ENCODE measurements at regions of chr10 and their contacts with region 1.

Region 1: DNA sequence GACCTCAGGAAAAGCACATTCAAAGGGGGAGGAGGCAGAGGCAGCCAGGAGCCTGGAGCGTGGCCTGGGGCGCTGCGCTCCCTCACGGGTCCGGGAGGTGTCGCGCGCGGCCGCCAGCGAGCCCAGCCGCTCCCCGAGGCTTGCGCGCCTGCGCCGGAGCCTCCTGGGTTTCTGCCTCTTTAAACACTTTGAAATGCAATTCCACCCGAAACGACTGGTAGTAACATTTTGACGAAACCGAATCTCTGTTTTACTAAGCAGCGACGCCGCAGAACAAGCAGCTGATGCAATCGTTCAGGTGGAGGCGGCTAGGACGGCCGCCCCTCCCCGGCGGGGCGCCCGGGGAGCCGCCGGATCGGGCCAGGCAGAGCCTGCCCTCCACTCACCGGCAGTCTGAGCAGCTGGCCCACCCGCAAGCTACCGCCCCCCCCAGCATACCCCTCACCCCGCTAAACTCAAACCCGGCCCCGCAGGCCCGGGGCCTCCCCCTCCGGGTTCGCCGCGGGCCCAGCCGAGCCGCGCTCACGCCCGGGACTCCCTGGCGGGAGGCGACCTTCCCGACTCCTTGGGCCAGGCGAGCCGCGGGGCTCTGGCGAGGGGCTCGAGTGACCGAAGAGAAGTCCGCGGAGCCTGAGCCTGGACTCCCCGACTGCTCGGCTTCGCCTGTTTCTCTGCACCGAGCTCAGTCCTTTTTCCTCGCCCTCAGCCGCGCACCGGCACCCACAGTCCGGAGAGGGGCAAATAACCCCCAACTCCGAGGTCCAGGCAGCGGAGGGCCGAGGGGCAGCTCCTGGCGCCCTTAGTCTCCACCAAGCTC is 3.2 kb downstream of the MKX start:
- DNase-seq: peak; percentile 58 to 82 (median 77)
- ATAC-seq: peak; percentile 87
- H3K4me3 ChIP-seq: peak overlapping the region; percentile 73
- H3K4me3 Mint-ChIP-seq: peak overlapping the region; percentile 70 to 96 (median 86)
- H3K27ac ChIP-seq: no peak overlapping the region
- H3K27ac Mint-ChIP-seq: peak overlapping the region in 1 of 9 donors; percentile 20
- H3K4me1 ChIP-seq: peaks cover 27 to 42% of the 10 kb centered on the region in 2 donors
- H3K4me1 Mint-ChIP-seq: peaks cover 23 to 44% (median 29%) of the 10 kb centered on the region in 7 donors
- H3K27me3 ChIP-seq: peaks cover 16 to 55% of the 10 kb centered on the region in 2 donors
- H3K27me3 Mint-ChIP-seq: peaks cover 51 to 82% (median 65%) of the 10 kb centered on the region in 5 donors

Region 2: GRCh38 chr10:27433976-27434375 is 308.4 kb before region 1 on chr10:
- CTCF ChIA-PET with region 1: no interaction called
- POLR2A ChIA-PET with region 1: no interaction called
- intact Hi-C with region 1: no loop called
- DNase-seq: no peak
- ATAC-seq: no peak
- H3K4me3 ChIP-seq: no peak overlapping the region
- H3K4me3 Mint-ChIP-seq: no peak overlapping the region
- H3K27ac ChIP-seq: no peak overlapping the region
- H3K27ac Mint-ChIP-seq: no peak overlapping the region
- H3K4me1 ChIP-seq: no peaks in the 10 kb centered on the region
- H3K4me1 Mint-ChIP-seq: no peaks in the 10 kb centered on the region
- H3K27me3 ChIP-seq: no peaks in the 10 kb centered on the region
- H3K27me3 Mint-ChIP-seq: peaks cover 0 to 26% (median 8%) of the 10 kb centered on the region in 5 donors

Region 3: GRCh38 chr10:27446091-27446918 is 296.1 kb before region 1 on chr10:
- CTCF ChIA-PET with region 1: no interaction called
- POLR2A ChIA-PET with region 1: no interaction called
- intact Hi-C with region 1: loop called in 1 of 2 experiments (anchors 10 kb)
- DNase-seq: peak in 6 of 9 donors; percentile 23 to 58 (median 46)
- ATAC-seq: peak; percentile 65
- H3K4me3 ChIP-seq: no peak overlapping the region
- H3K4me3 Mint-ChIP-seq: peak overlapping the region in 3 of 10 donors; percentile 20 to 53 (median 23)
- H3K27ac ChIP-seq: no peak overlapping the region
- H3K27ac Mint-ChIP-seq: peak overlapping the region in 1 of 9 donors; percentile 32
- H3K4me1 ChIP-seq: no peaks in the 10 kb centered on the region
- H3K4me1 Mint-ChIP-seq: peaks cover 6 to 19% (median 17%) of the 10 kb centered on the region in 7 donors
- H3K27me3 ChIP-seq: no peaks in the 10 kb centered on the region
- H3K27me3 Mint-ChIP-seq: peaks cover 0 to 16% (median 0%) of the 10 kb centered on the region in 5 donors

Region 4: DNA sequence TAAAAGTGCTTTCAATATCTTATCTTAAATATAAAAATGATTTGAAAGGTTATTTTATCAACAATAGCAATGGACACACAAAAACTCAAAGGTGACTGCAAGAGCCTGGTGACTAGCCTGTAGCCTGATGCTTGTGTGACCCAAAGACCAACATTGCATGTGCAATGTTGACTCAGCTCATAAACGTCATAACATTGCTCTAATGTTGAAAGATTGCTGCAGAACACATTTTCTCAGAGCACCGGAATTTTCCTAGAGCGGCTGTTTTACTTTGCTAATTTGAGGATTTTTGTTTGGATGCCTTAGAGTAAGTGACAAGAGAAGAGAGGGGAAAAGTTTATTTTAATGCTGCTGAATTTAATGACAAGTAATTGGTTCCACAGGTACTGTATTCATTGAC is 131.2 kb before region 1 on chr10:
- CTCF ChIA-PET with region 1: no interaction called
- POLR2A ChIA-PET with region 1: no interaction called
- intact Hi-C with region 1: no loop called
- DNase-seq: no peak
- ATAC-seq: no peak
- H3K4me3 ChIP-seq: no peak overlapping the region
- H3K4me3 Mint-ChIP-seq: no peak overlapping the region
- H3K27ac ChIP-seq: no peak overlapping the region
- H3K27ac Mint-ChIP-seq: no peak overlapping the region
- H3K4me1 ChIP-seq: no peaks in the 10 kb centered on the region
- H3K4me1 Mint-ChIP-seq: peaks cover 0 to 12% (median 4%) of the 10 kb centered on the region in 7 donors
- H3K27me3 ChIP-seq: no peaks in the 10 kb centered on the region
- H3K27me3 Mint-ChIP-seq: peaks cover 3 to 10% (median 5%) of the 10 kb centered on the region in 5 donors

Region 5: DNA sequence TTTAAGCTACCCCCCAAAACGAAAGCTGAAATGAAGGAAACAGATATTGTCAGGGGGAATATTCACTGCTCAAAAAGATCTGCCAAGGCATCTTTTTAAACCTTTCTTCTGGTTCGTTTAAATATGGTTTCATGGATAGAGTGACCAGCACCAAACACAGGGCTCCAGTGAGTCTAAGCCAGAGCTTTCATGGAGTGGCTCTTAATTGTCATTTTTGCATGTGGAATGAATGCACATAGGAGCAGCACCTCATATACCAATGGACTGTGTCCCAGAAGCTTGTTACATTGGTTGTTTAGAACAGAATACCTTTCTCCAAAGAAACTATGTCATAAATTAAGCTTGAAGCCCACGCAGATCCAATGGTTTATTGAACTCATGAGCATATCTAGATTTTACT is 14.1 kb before region 1 on chr10:
- CTCF ChIA-PET with region 1: no interaction called
- POLR2A ChIA-PET with region 1: no interaction called
- intact Hi-C with region 1: no loop called
- DNase-seq: no peak
- ATAC-seq: no peak
- H3K4me3 ChIP-seq: no peak overlapping the region
- H3K4me3 Mint-ChIP-seq: no peak overlapping the region
- H3K27ac ChIP-seq: no peak overlapping the region
- H3K27ac Mint-ChIP-seq: no peak overlapping the region
- H3K4me1 ChIP-seq: no peaks in the 10 kb centered on the region
- H3K4me1 Mint-ChIP-seq: no peaks in the 10 kb centered on the region
- H3K27me3 ChIP-seq: no peaks in the 10 kb centered on the region
- H3K27me3 Mint-ChIP-seq: peaks cover 14 to 44% (median 34%) of the 10 kb centered on the region in 5 donors

Region 6: DNA sequence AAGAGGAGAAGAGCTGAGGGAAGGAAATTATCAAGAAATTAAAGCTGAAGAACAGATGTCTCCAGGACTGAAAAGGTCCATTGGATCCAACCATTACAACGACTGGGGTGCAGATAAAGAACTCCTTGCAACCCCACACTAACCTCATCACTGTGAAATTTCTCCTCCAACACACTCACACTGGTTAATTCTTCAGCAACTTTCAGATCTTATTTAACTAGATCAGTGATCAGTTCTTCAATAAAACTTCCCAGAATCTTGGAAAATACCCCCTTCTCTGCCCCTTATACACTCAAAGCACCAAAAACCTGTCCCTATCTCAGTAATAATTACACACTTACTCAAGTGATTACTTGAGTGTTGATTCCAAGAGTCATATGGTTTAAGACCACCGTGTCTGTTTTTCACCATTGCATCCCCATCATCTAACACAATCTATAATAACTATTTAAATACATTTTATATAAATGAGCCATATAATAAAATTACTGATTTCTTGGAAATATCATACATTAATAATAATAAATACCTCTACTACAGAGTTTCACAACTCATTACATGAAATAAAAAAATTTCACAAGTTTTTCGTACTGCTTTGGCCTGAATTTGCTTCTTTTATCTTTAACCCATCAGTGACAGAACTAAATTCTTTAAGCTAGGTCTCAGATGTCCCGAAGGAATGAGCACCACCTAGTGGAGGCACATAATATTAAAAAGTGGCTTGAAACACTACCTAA is 436.8 kb after region 1 on chr10:
- CTCF ChIA-PET with region 1: interaction called, 3 read pairs
- POLR2A ChIA-PET with region 1: no interaction called
- intact Hi-C with region 1: loop called (anchors 1 kb)
- DNase-seq: peak in 7 of 9 donors; percentile 18 to 63 (median 49)
- ATAC-seq: peak; percentile 86
- H3K4me3 ChIP-seq: peak overlapping the region; percentile 55
- H3K4me3 Mint-ChIP-seq: peak overlapping the region; percentile 0 to 98 (median 87)
- H3K27ac ChIP-seq: peak overlapping the region; percentile 54
- H3K27ac Mint-ChIP-seq: peak overlapping the region; percentile 77 to 98 (median 92)
- H3K4me1 ChIP-seq: peaks cover 10 to 12% of the 10 kb centered on the region in 2 donors
- H3K4me1 Mint-ChIP-seq: peaks cover 17 to 70% (median 55%) of the 10 kb centered on the region in 7 donors
- H3K27me3 ChIP-seq: no peaks in the 10 kb centered on the region
- H3K27me3 Mint-ChIP-seq: peaks cover 0 to 9% (median 0%) of the 10 kb centered on the region in 5 donors

Region 7: DNA sequence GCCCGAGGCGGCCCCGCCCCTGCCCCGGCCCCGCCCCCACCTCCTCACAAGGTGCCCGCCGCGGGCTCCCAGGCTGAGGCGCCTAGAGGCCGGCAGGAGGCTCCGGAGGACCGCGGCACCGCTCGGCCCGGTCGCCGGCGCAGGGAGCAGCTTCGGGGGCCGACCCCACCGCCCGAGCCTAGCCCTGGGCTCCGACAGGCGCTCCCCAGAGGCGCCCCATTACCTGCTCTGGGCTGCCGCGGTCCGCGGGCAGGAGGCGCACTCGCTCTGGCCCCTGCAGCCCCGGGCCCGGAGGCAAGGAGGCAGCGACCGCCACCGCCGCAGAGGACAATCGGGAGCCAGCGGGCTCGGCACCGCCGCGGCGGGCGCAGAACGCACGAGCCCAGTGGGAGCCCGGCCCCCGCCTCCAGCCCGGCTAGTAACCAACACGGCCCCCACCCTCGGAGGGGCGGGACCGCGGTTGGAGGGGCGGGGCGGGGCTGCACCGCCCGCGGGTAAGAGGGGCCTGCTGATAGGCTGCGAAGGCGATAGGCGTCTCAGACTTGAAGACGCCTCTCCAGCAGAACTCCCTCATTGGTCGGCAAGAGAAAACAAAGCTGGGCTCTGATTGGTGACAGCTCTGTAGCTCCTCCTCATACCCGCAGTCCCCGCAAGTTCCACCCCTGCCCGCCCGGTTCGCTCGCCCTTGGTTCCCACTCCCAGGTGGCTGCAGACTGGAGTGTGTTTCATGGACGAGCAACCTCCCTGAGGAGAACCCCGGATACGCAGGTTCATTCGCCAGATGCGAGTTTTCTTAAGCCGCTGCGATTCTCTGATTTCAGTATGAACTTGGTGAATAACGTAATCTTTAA is 560.5 kb after region 1 on chr10 and contains the start of gene MPP7:
- CTCF ChIA-PET with region 1: no interaction called
- POLR2A ChIA-PET with region 1: interaction called, 3 read pairs
- intact Hi-C with region 1: loop called (anchors 1 to 2 kb)
- DNase-seq: peak; percentile 96 to 98 (median 97)
- ATAC-seq: peak; percentile 97
- H3K4me3 ChIP-seq: peak within 1 kb of the TSS; percentile 92
- H3K4me3 Mint-ChIP-seq: peak within 1 kb of the TSS; percentile 85 to 99 (median 93)
- H3K27ac ChIP-seq: peak within 1 kb of the TSS; percentile 86
- H3K27ac Mint-ChIP-seq: peak within 1 kb of the TSS; percentile 67 to 98 (median 94)
- H3K4me1 ChIP-seq: peaks cover 8 to 42% of the 10 kb centered on the region in 2 donors
- H3K4me1 Mint-ChIP-seq: peaks cover 27 to 80% (median 67%) of the 10 kb centered on the region in 7 donors
- H3K27me3 ChIP-seq: no peaks in the 10 kb centered on the region
- H3K27me3 Mint-ChIP-seq: peaks cover 0 to 51% (median 0%) of the 10 kb centered on the region in 5 donors
- total RNA-seq, gene MPP7: 9.7 to 44.7 (median 36.1) TPM

Region 8: GRCh38 chr10:28676968-28677887 is 934.8 kb after region 1 on chr10 and contains the start of gene BAMBI:
- CTCF ChIA-PET with region 1: no interaction called
- POLR2A ChIA-PET with region 1: no interaction called
- intact Hi-C with region 1: loop called in 1 of 2 experiments (anchors 5 kb)
- DNase-seq: peak; percentile 86 to 95 (median 90)
- ATAC-seq: peak; percentile 97
- H3K4me3 ChIP-seq: peak within 1 kb of the TSS; percentile 57
- H3K4me3 Mint-ChIP-seq: peak within 1 kb of the TSS; percentile 79 to 94 (median 84)
- H3K27ac ChIP-seq: no peak within 1 kb of the TSS
- H3K27ac Mint-ChIP-seq: peak within 1 kb of the TSS in 3 of 9 donors; percentile 24 to 52 (median 43)
- H3K4me1 ChIP-seq: peaks cover 0 to 26% of the 10 kb centered on the region in 2 donors
- H3K4me1 Mint-ChIP-seq: peaks cover 19 to 32% (median 26%) of the 10 kb centered on the region in 7 donors
- H3K27me3 ChIP-seq: peaks cover 11 to 20% of the 10 kb centered on the region in 2 donors
- H3K27me3 Mint-ChIP-seq: peaks cover 63 to 80% (median 70%) of the 10 kb centered on the region in 5 donors
- total RNA-seq, gene BAMBI: 0.12 to 1.6 (median 0.80) TPM in 4 of 5 experiments, not detected in the other